A549 (cell line): ENCODE measurements at regions of chr19 and their contacts with region 1.

Region 1: DNA sequence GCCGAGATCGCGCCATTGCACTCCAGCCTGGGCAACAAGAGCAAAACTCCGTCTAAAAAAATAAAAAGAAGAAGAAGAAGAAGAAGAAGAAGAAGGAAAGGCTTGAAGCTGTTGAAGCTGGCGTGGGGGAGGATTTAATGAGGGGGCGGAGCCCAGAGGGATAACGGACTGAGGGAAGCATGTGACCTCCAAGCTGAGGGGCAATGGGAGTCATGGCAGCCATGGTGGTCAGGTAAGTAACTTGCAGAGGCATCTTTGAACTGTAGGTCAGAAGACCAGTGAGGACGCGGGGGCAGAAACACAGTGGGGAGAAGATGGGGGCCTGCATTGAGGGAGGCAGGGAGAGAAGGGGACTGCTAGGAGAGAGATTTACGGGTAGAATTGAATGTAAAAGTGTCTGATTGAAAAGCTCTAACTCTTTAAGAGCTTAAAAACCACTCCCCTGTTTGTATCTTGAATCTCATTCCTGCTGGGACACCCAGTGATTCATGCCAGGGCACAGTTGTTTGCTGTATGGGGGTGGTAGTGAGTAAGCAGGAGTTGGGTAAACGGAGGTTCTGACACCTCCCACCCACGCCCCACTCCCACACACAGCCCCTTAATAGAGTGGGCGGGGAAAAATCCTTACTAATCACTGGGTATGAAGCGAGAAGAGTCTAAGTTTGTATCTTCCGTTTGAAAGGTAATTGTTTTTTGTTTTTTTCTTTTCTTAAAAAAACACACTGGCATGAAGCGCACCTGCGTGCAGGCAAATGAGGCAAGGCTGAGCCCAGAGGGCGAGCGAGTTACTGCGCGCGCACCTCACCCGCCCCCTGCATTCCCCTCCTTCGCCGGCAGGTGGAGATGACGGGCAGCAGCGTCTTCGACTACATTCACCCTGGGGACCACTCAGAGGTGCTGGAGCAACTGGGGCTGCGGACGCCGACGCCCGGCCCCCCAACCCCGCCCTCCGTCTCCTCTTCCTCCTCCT is 13.0 kb downstream of the TMEM160 start:
- DNase-seq: peak; percentile 92 to 99
- ATAC-seq: peak; percentile 81 to 89
- H3K4me3 ChIP-seq: peak overlapping the region; percentile 52
- H3K27ac ChIP-seq: peak overlapping the region; percentile 89
- H3K4me1 ChIP-seq: peaks cover 17% of the 10 kb centered on the region
- CTCF ChIP-seq: peak; percentile 81
- EP300 ChIP-seq: no peak
- POLR2A ChIP-seq: peak; percentile 36
- RAD21 ChIP-seq: peak; percentile 64 to 78

Region 2: DNA sequence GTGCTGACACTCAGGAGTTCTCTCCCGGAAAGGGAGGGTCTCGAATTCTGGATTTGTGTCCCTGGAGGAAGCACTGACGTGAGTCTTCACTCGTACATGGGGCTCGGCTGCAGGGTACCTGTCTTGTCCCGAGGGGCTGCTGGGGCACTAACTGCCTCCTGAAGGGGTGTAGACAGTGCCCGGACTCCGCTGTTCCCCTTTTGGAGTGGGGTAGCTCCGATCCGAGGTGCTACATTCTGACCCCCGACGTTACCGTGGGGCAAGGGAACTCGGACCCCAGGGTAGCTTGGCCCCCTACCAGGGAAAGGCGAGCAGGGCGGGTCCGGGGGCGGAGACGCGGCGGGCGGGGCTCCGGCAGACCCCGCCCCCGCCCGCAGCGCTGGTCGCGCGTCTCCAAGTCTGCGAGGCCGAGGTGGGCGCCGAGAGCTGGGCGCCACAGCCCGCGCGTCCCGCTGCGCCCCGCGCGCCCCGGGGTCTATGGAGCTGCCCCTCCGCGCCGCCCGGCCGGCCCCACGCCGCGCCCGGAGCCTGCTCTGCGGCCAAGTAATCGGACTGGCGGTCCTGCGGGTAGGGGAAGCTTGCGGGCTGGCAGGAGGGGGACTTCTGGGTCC is 15.9 kb before region 1 on chr19 and contains the start of gene NPAS1:
- CTCF ChIA-PET with region 1: interaction called, 127 read pairs
- POLR2A ChIA-PET with region 1: no interaction called
- DNase-seq: no peak
- ATAC-seq: peak; percentile 35 to 42; a peak in 5 of 6 replicates
- H3K4me3 ChIP-seq: peak within 1 kb of the TSS; percentile 50
- H3K27ac ChIP-seq: peak within 1 kb of the TSS in 1 of 2 experiments; percentile 70; a peak in 3 of 6 replicates
- H3K4me1 ChIP-seq: peaks cover 31% of the 10 kb centered on the region
- CTCF ChIP-seq: no peak
- EP300 ChIP-seq: no peak
- POLR2A ChIP-seq: no peak
- RAD21 ChIP-seq: no peak
- polyA plus RNA-seq, gene NPAS1: 1.3 and 1.5 TPM in 2 replicates

Region 3: DNA sequence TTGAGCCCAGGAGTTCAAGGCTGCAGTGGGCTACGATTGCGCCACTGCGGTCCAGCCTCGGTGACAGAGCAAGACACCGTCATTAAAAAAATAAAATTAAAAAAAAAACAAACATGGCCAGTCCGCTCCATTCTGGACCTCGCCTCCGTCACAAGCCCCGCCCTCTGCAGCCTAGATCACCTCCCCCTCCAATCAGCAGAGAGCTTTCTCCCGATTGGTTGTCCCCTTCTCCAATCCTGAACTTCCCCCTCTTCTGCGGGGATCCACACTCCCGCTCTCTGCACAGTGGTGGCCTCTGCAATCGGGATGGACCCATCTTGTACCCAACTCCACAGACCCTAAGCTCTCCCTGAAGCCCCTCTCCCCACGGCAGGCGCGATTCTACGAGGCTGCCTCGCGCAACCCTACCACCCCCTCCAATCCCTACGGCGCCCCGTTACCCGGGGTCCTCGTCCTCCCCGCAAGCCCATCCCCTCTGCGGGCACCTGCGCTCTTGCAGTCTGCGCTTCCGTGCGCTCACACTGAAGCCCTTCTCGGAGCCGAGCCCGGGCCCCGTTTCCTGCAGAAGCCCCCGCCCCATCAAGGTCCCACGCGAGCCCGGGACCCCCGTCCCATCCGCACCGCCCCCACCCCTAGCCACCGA is 12.5 kb after region 1 on chr19:
- CTCF ChIA-PET with region 1: interaction called, 13 read pairs
- POLR2A ChIA-PET with region 1: interaction called, 10 read pairs
- DNase-seq: peak; percentile 94 to 100
- ATAC-seq: peak; percentile 86 to 88
- H3K4me3 ChIP-seq: peak overlapping the region; percentile 80
- H3K27ac ChIP-seq: peak overlapping the region; percentile 78 to 91
- H3K4me1 ChIP-seq: 0 out of 3 replicates have a peak, but pooled peaks cover 4% of the 10 kb centered on the region
- CTCF ChIP-seq: no peak
- EP300 ChIP-seq: no peak
- POLR2A ChIP-seq: peak; percentile 68
- RAD21 ChIP-seq: no peak

Region 4: DNA sequence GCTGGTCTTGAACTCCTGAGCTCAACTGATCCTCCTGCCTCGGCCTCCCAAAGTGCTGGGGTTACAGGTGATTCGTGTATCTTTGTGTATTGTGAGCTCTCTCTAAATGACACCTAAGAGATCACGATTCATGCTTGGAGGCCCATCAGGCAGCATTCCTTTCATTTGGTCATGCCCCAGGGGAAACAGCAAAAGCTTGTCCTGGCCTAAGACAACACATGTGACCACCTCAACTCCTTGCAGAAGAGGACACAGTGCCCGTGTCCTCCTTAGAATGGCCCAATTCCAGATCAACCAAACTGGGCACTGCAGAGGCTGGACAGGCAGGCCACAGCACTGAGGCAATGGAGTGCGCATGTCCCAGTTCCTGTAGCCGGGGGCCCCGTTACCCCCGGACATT is 45.7 kb after region 1 on chr19:
- CTCF ChIA-PET with region 1: interaction called, 14 read pairs
- POLR2A ChIA-PET with region 1: no interaction called
- DNase-seq: no peak
- ATAC-seq: no peak
- H3K4me3 ChIP-seq: no peak overlapping the region
- H3K27ac ChIP-seq: no peak overlapping the region
- H3K4me1 ChIP-seq: peaks cover 8% of the 10 kb centered on the region
- CTCF ChIP-seq: no peak
- EP300 ChIP-seq: no peak
- POLR2A ChIP-seq: no peak
- RAD21 ChIP-seq: no peak

Region 5: GRCh38 chr19:47094557-47095475 is 59.4 kb after region 1 on chr19:
- CTCF ChIA-PET with region 1: interaction called, 22 read pairs
- POLR2A ChIA-PET with region 1: no interaction called
- DNase-seq: no peak
- ATAC-seq: no peak; a peak in 1 of 6 replicates
- H3K4me3 ChIP-seq: no peak overlapping the region
- H3K27ac ChIP-seq: peak overlapping the region; percentile 43 to 68; a peak in 3 of 6 replicates
- H3K4me1 ChIP-seq: peaks cover 26% of the 10 kb centered on the region
- CTCF ChIP-seq: no peak
- EP300 ChIP-seq: no peak
- POLR2A ChIP-seq: no peak
- RAD21 ChIP-seq: no peak

Region 6: DNA sequence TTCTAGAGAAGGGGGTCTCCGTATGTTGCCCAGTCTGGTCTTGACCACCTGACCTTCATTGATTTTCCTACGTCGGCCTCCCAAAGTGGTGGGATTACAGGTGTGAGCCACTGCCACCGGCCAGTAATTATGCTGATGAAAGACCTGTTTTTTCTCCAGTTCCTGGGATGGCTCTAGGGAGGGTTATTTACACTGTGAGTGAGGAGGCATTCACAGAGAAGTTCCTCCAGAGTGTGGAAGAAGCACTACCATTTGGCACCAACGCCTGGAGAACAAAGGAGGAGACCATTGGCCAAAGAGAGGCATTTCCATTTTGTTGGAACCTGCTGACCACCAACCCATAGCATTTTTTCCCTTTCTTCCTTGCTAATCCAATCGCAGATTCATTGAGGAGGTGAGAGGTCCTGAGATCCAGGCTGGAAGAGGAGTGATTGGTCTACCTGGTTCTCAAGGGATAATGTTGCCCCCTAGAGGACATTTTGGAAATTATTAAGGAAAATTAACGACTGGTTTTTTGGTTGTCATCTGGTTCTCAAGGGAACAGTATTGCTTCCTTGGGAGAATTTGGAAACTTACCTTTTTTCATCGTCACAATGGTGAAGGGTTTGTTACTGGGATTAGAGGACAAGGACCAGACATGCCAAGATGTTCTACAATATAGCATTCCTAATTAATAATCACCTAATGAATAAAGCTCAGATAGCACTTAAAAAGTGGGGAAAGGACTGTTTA is 89.7 kb after region 1 on chr19:
- CTCF ChIA-PET with region 1: interaction called, 41 read pairs
- POLR2A ChIA-PET with region 1: no interaction called
- DNase-seq: peak; percentile 86 to 90
- ATAC-seq: peak; percentile 84 to 85
- H3K4me3 ChIP-seq: no peak overlapping the region
- H3K27ac ChIP-seq: peak overlapping the region in 1 of 2 experiments; percentile 51; a peak in 3 of 6 replicates
- H3K4me1 ChIP-seq: peaks cover 33% of the 10 kb centered on the region
- CTCF ChIP-seq: peak; percentile 95
- EP300 ChIP-seq: no peak
- POLR2A ChIP-seq: no peak
- RAD21 ChIP-seq: peak; percentile 91 to 95

Region 7: DNA sequence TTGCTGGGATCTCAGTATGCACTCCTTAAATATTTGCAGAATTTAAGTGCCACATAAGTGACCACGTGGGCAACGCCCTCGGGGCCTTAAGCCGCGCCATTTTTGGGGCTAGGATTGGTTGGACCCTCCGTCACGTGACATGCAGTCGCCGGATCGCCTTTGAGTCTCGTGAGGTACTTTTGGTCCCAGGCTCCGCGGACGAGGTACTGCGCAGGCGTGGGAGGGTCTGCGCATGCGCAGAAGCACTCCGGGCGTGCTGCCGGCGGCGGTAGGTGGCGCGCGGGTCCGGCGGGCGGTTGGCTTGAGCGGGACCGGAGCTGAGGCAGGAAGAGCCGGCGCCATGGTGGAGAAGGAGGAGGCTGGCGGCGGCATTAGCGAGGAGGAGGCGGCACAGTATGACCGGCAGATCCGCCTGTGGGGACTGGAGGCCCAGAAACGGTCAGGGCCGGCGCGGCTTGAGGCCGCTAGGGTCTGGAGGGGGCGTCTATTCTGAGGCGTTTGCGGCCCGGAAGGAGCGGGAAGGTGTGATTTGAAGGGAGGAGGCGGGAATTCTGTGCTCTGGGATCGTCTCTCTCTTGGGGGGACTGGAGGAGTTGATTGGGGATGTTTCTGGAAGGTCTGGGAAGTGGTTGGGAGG is 95.3 kb after region 1 on chr19 and contains the start of gene SAE1:
- CTCF ChIA-PET with region 1: interaction called, 41 read pairs
- POLR2A ChIA-PET with region 1: interaction called, 5 read pairs
- DNase-seq: peak; percentile 100
- ATAC-seq: peak; percentile 91 to 92
- H3K4me3 ChIP-seq: peak within 1 kb of the TSS; percentile 71
- H3K27ac ChIP-seq: peak within 1 kb of the TSS; percentile 92 to 93
- H3K4me1 ChIP-seq: peaks cover 35% of the 10 kb centered on the region
- CTCF ChIP-seq: peak; percentile 50
- EP300 ChIP-seq: no peak
- POLR2A ChIP-seq: peak; percentile 90
- RAD21 ChIP-seq: peak in 1 of 2 experiments; percentile 53; a peak in 2 of 5 replicates
- polyA plus RNA-seq, gene SAE1: 229 and 249 TPM in 2 replicates

Region 8: GRCh38 chr19:47142779-47143178 is 107.4 kb after region 1 on chr19:
- CTCF ChIA-PET with region 1: no interaction called
- POLR2A ChIA-PET with region 1: no interaction called
- DNase-seq: no peak
- ATAC-seq: peak; percentile 77 to 79; a peak in 5 of 6 replicates
- H3K4me3 ChIP-seq: no peak overlapping the region
- H3K27ac ChIP-seq: peak overlapping the region in 1 of 2 experiments; percentile 40; a peak in 2 of 6 replicates
- H3K4me1 ChIP-seq: peaks cover 34% of the 10 kb centered on the region
- CTCF ChIP-seq: no peak
- EP300 ChIP-seq: no peak
- POLR2A ChIP-seq: no peak
- RAD21 ChIP-seq: no peak